H1 (cell line): ENCODE measurements at regions of chr5 and their contacts with region 1.

Region 1: DNA sequence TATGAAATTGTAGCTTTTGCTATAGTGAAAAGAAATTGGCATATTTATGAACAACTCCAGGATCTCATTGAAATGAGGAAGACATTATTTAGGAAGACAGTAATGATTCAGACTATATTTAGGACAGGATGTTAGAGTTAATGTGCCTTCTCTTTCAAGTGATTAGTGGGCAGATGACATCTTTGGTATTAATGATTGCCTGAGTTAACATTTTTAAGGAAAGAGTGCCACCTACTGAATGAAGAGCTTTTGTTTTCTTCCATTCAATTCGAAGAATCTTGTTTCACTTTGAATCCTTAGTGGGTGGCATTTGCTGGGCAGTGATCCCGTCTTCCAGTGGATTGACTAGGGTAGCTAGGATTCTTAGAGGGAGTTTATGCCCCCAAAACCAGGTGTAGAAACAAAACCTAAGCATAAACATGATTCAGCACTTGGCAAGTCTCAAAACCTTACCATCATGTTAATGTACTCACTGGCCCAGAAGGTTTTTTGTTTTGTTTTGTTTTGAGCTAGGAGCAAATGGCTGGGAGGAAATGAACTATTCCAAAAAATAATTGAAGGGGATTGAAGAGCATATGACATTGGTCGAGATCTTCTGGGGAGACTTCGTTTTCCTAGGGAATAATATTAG is 23.2 kb downstream of the MAP3K1 start:
- DNase-seq: no peak
- H3K4me3 ChIP-seq: no peak overlapping the region
- H3K27ac ChIP-seq: no peak overlapping the region
- H3K4me1 ChIP-seq: peaks cover 0 to 15% (median 3%) of the 10 kb centered on the region in 4 experiments; a peak in 3 of 7 replicates
- H3K27me3 ChIP-seq: no peaks in the 10 kb centered on the region
- CTCF ChIP-seq: peak in 2 of 3 experiments; percentile 26 to 49; a peak in 2 of 4 replicates
- EP300 ChIP-seq: no peak
- POLR2A ChIP-seq: no peak
- RAD21 ChIP-seq: peak; percentile 81 to 85

Region 2: GRCh38 chr5:56827049-56827448 is 11.5 kb before region 1 on chr5:
- CTCF ChIA-PET with region 1: interaction called, 52 read pairs
- POLR2A ChIA-PET with region 1: no interaction called
- DNase-seq: no peak
- H3K4me3 ChIP-seq: no peak overlapping the region
- H3K27ac ChIP-seq: no peak overlapping the region
- H3K4me1 ChIP-seq: peaks cover 2 to 12% (median 8%) of the 10 kb centered on the region in 4 experiments; a peak in 4 of 7 replicates
- H3K27me3 ChIP-seq: no peaks in the 10 kb centered on the region
- CTCF ChIP-seq: peak; percentile 29 to 71 (median 48); a peak in 3 of 4 replicates
- EP300 ChIP-seq: no peak
- POLR2A ChIP-seq: no peak
- RAD21 ChIP-seq: peak; percentile 49 to 67

Region 3: DNA sequence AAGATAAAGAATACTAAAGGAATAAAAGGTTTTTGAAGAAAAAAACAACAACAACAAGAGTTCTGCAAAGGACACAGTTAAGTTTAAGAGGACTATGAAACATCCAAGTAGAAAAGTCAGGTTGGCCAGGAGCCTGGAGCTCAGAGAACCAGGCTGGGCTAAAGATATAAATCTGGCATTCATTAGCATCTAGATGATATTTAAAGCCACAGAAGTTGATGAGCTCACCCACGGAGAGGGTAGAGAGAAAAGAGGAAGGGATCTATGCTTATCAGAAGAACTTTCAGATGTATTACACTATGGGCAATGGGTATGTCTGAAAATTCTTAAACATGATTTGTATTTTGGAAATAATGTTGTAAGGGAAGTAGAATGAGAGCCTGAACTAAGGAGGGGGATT is 103.5 kb after region 1 on chr5:
- CTCF ChIA-PET with region 1: no interaction called
- POLR2A ChIA-PET with region 1: no interaction called
- DNase-seq: no peak
- H3K4me3 ChIP-seq: no peak overlapping the region
- H3K27ac ChIP-seq: no peak overlapping the region
- H3K4me1 ChIP-seq: no peaks in the 10 kb centered on the region
- H3K27me3 ChIP-seq: no peaks in the 10 kb centered on the region
- CTCF ChIP-seq: no peak
- EP300 ChIP-seq: no peak
- POLR2A ChIP-seq: no peak
- RAD21 ChIP-seq: no peak